Right cardiac atrium (tissue), 5 donors: ENCODE measurements at regions of chr2 and their contacts with region 1.

Region 1: GRCh38 chr2:241271641-241272297 is 43.7 kb downstream of the HDLBP start:
- DNase-seq: peak; percentile 87 to 95 (median 94)
- ATAC-seq: peak; percentile 83 to 89
- H3K4me3 ChIP-seq: peak overlapping the region; percentile 98
- H3K27ac ChIP-seq: peak overlapping the region; percentile 76
- H3K4me1 ChIP-seq: peaks cover 11% of the 10 kb centered on the region
- H3K27me3 ChIP-seq: no peaks in the 10 kb centered on the region

Region 2: DNA sequence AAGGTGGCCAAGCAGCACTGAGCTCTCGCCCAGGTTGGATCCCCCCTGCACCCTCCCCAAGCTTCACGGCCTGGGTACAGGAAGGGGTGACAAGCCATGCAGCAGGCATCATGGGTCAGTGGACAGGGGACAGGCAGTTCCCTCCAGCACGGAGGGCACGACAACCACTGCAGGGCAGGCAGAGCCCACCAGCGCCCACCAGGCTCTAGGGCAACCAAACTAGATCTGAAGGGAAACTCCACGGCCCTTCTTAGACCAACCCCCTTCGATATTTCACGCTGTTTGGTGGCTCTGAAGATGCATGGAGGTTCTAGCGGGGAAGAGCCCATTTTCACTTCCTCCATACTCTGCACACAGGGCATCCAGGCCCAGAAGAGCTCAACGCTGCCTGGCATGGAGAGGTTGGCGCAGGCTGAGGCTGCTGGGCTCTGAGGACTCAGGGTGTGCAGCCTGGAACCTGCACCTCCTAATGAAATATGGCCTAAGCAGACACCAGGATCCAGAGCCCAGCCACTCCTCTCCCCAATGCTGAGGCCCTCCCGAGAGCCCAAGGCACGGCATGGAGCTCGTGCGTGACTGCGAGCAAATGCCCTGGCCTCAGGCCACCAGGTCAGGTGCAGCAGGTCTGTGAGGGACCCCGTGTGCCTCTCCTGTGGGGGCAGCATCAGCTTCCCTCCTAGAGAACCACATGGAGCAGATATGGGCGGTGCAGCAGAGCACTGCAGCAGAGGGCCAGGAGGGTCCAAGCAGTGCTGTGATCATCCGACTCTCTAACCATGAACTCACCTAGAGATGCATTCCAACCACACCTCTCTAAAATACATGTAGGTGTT is 160.9 kb before region 1 on chr2:
- intact Hi-C with region 1: no loop called
- DNase-seq: no peak
- ATAC-seq: peak; percentile 15 to 31
- H3K4me3 ChIP-seq: no peak overlapping the region
- H3K27ac ChIP-seq: no peak overlapping the region
- H3K4me1 ChIP-seq: no peaks in the 10 kb centered on the region
- H3K27me3 ChIP-seq: no peaks in the 10 kb centered on the region

Region 3: GRCh38 chr2:241315093-241315878 is 43.5 kb after region 1 on chr2 and contains the start of gene HDLBP:
- intact Hi-C with region 1: loop called in 2 of 4 experiments (anchors 5 to 10 kb)
- DNase-seq: peak; percentile 100
- ATAC-seq: peak; percentile 94 to 95
- H3K4me3 ChIP-seq: peak within 1 kb of the TSS; percentile 79
- H3K27ac ChIP-seq: peak within 1 kb of the TSS; percentile 98
- H3K4me1 ChIP-seq: no peaks in the 10 kb centered on the region
- H3K27me3 ChIP-seq: no peaks in the 10 kb centered on the region
- total RNA-seq, gene HDLBP: 368 to 394 (median 376) TPM

Region 4: GRCh38 chr2:241324775-241325174 is 53.0 kb after region 1 on chr2:
- intact Hi-C with region 1: loop called in 2 of 4 experiments (anchors 5 to 10 kb)
- DNase-seq: no peak
- ATAC-seq: no peak
- H3K4me3 ChIP-seq: no peak overlapping the region
- H3K27ac ChIP-seq: no peak overlapping the region
- H3K4me1 ChIP-seq: peaks cover 5% of the 10 kb centered on the region
- H3K27me3 ChIP-seq: no peaks in the 10 kb centered on the region

Region 5: GRCh38 chr2:241461693-241462677 is 190.2 kb after region 1 on chr2:
- intact Hi-C with region 1: no loop called
- DNase-seq: no peak
- ATAC-seq: peak in 1 of 2 donors; percentile 11
- H3K4me3 ChIP-seq: no peak overlapping the region
- H3K27ac ChIP-seq: no peak overlapping the region
- H3K4me1 ChIP-seq: no peaks in the 10 kb centered on the region
- H3K27me3 ChIP-seq: no peaks in the 10 kb centered on the region